ENCODE measurements at regions of chr15 and their contacts with region 1.

Region 1: DNA sequence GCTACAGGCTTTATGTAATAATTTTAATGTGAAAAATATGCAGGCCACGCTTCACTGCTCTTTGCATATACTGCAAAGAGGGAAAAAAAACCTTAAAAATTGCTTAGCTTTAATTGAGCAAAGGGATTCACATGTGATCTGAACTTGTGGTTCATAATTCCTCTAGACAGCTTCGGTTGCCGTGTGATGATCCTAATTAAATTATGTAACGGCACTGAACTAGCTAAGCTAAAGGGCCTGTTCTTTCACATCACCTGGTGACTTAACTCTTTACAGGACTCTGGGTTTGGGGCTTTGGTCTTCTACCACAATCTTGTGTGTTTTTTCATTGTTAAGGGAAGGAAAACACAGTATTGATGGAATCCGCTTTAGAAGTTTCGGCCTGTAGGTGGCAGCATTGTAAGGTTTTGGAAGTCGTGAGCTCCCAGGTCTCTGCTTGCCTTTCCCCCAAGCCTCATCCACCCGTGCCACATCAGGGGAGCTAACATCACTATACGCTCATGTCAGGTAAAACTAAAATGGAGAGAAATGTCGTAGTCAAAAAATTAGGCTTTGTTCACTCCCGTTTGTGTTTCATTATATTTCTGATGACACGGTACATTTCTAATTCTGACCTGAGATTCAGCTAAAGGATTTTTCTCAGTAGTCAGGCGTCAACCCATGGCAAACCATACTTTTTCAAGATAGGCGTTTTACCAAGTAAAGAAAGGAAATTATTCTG is 205.6 kb upstream of the DPH6 start:
- DNase-seq: peak; percentile 53
- H3K27ac ChIP-seq: no peak overlapping the region
- CTCF ChIP-seq: peak; percentile 82

Region 2: DNA sequence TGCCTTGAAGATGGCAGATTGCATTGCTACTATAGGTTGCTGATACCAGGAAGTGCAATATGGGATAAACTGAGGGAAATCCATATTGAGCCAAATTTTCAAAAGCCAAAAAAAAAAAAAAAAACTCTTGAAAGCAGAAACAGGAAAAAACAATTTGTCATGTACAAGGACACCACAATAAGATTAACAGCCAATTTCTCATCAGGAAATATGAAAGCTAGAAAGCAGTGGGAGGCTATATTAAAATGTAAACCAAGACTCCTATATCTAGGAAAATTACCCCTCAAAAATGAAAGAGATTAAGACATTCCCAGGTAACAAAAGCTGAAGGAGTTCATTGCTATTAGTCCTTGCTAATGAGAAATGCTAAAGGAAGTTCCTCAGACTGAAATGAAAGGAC is 257.1 kb after region 1 on chr15:
- CTCF ChIA-PET with region 1: interaction called, 10 read pairs
- POLR2A ChIA-PET with region 1: no interaction called
- DNase-seq: no peak
- H3K27ac ChIP-seq: no peak overlapping the region
- CTCF ChIP-seq: no peak

Measured in RWPE1 (cell line).